ENCODE measurements at regions of chr4 and their contacts with region 1.

Region 1: GRCh38 chr4:140252742-140253555 is 99.0 kb upstream of the MAML3 start:
- DNase-seq: peak; percentile 67
- ATAC-seq: peak; percentile 83
- H3K4me3 Mint-ChIP-seq: peak overlapping the region; percentile 72
- H3K27ac Mint-ChIP-seq: no peak overlapping the region
- H3K4me1 Mint-ChIP-seq: peaks cover 8% of the 10 kb centered on the region
- H3K27me3 Mint-ChIP-seq: peaks cover 25% of the 10 kb centered on the region
- CTCF ChIP-seq: peak; percentile 82

Region 2: GRCh38 chr4:139603576-139604387 is 649.2 kb before region 1 on chr4:
- CTCF ChIA-PET with region 1: interaction called, 24 read pairs
- POLR2A ChIA-PET with region 1: no interaction called
- intact Hi-C with region 1: loop called (anchors 1 kb)
- DNase-seq: no peak
- ATAC-seq: peak; percentile 45
- H3K4me3 Mint-ChIP-seq: no peak overlapping the region
- H3K27ac Mint-ChIP-seq: no peak overlapping the region
- H3K4me1 Mint-ChIP-seq: peaks cover 9% of the 10 kb centered on the region
- H3K27me3 Mint-ChIP-seq: peaks cover 5% of the 10 kb centered on the region
- CTCF ChIP-seq: no peak

Region 3: DNA sequence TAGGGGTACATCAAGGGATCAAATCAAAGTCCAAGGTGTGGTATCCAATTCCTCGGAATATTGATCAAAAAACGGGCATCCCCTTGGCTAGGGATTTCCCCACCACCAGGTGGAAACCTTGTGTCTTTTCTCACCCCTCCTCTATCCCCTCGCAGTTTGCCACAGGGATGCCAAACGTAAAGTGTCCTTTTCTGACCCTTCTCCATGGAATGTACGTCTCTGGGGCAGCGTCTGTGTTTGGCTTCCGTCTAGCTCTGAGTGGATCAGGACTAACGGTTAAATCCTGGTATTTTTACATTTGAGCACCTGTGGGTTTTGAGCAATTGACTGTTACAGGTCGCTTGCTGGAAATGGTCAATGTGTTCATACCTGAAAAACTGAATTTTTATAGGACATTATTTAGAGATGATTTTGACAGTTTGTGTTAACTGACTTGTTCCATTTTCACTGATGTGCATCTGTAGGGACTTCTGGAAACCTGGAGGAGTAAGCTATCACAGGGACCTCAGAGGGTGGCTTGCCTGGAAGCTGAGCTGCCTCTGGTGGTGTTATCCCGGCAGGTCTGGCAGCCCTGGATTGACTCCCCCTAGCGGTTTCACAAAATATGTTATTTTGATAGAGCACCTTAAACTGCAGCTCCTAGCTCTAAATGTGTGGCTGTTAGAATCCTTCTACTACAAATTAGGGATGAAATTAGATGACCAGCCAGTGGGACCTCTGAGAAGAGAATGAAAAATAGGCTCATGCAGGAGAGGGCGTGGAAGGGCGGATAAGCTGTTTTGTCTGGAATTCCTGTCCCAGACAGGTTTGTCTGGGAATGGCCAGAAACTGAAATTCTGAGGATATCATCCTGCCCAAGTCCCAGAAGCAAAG is 596.1 kb before region 1 on chr4:
- CTCF ChIA-PET with region 1: interaction called, 18 read pairs
- POLR2A ChIA-PET with region 1: no interaction called
- intact Hi-C with region 1: loop called (anchors 1 kb)
- DNase-seq: no peak
- ATAC-seq: peak; percentile 79
- H3K4me3 Mint-ChIP-seq: no peak overlapping the region
- H3K27ac Mint-ChIP-seq: no peak overlapping the region
- H3K4me1 Mint-ChIP-seq: peaks cover 5% of the 10 kb centered on the region
- H3K27me3 Mint-ChIP-seq: peaks cover 17% of the 10 kb centered on the region
- CTCF ChIP-seq: peak; percentile 70

Region 4: DNA sequence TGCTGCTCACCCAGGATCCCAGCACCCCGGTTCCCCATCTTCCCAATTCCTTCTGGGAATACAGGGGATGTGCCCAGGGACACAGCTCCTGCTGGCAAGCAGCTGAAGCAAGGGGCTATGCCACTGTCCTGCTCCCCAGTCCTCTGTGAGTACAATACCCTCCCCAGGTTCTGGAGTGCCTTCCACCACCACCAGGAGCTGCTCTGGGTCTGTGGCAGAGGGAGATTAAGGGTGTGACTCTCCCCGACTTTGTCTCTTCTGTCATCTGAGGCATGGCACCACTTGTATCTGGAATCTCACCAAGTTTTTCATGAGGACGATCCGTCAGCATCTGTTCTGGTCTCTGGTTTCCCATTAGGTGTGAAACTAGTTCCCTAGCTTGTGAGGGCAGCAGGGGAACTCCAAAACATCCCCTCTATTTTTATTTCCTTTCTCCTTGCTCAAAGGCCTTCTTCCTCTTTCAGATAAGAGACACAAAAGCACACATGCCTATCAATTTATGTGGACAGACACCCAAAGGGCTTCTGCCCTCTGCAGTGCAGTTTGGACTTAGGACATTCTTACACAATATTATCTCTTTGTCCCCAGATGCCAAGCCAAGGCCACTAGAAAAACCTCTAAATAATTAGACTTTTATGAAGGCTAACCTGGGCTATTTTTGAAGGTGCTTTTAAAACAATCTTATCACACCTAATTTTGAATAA is 560.5 kb before region 1 on chr4:
- CTCF ChIA-PET with region 1: no interaction called
- POLR2A ChIA-PET with region 1: no interaction called
- intact Hi-C with region 1: loop called (anchors 1 kb)
- DNase-seq: no peak
- ATAC-seq: no peak
- H3K4me3 Mint-ChIP-seq: no peak overlapping the region
- H3K27ac Mint-ChIP-seq: no peak overlapping the region
- H3K4me1 Mint-ChIP-seq: peaks cover 4% of the 10 kb centered on the region
- H3K27me3 Mint-ChIP-seq: no peaks in the 10 kb centered on the region
- CTCF ChIP-seq: no peak

Region 5: GRCh38 chr4:139734875-139735380 is 518.0 kb before region 1 on chr4:
- CTCF ChIA-PET with region 1: interaction called, 42 read pairs
- POLR2A ChIA-PET with region 1: no interaction called
- intact Hi-C with region 1: loop called (anchors 1 kb)
- DNase-seq: peak; percentile 66
- ATAC-seq: peak; percentile 87
- H3K4me3 Mint-ChIP-seq: peak overlapping the region; percentile 76
- H3K27ac Mint-ChIP-seq: no peak overlapping the region
- H3K4me1 Mint-ChIP-seq: peaks cover 15% of the 10 kb centered on the region
- H3K27me3 Mint-ChIP-seq: peaks cover 13% of the 10 kb centered on the region
- CTCF ChIP-seq: no peak

Region 6: DNA sequence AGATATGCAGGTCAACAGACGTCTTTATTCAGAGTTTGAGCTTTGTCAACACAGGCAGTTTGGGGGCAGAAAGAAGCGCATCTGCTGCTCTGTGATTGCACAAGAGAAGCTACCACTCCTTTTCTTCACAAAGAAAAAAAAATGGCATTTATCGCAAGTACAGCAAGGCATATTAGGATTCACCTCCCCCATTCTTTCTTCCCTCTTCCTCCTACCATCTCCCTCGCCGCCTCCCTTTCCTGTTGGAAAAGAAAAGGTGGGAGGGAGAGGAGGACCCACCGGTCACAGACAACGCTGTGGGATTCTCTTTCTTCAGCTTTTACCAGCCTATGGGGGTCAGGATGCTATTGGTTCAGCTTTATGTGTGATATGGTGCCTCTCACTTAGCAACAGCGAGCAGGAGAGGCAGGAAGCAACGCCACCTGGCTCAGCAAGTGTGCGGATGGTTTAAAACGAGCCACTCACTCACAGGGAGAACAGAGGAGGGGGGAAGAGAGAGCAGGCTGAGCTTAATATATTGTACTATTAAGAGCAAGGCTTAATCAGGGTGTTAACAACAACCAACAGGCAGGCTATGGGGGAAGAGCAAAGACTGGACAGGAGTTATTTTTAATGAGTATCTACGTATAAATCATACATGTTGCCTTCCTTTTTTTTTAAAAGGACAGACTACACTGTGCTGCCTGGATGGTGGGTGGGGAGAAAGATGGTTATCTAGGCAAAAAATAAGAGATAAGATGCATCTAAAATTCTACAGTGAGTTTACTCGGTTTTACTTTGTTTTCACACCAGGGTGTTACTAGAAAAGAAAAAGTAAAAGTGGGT is 203.7 kb before region 1 on chr4:
- CTCF ChIA-PET with region 1: interaction called, 23 read pairs
- POLR2A ChIA-PET with region 1: no interaction called
- intact Hi-C with region 1: loop called (anchors 1 kb)
- DNase-seq: no peak
- ATAC-seq: peak; percentile 81
- H3K4me3 Mint-ChIP-seq: peak overlapping the region; percentile 74
- H3K27ac Mint-ChIP-seq: peak overlapping the region; percentile 33
- H3K4me1 Mint-ChIP-seq: peaks cover 33% of the 10 kb centered on the region
- H3K27me3 Mint-ChIP-seq: peaks cover 14% of the 10 kb centered on the region
- CTCF ChIP-seq: no peak

Region 7: DNA sequence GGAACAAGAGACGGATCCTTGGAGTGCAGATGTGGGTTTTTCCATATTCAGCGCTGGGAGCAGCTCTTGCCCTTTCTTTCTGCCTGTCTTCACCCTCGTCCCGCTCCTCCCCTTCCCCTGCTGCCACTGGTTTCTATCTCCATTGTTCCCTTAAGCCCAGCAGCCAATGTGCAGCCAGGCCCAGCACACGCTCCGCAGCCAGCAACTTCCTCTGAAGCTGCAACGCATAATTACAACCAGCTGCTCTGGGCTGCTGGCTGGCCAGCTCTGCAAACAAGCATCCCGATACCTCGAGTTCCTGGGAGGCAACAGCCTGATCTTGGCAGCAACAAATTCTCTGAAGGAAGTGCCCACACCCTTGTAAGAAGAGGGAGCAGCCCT is 15.4 kb before region 1 on chr4:
- CTCF ChIA-PET with region 1: interaction called, 20 read pairs
- POLR2A ChIA-PET with region 1: interaction called, 11 read pairs
- intact Hi-C with region 1: no loop called
- DNase-seq: no peak
- ATAC-seq: no peak
- H3K4me3 Mint-ChIP-seq: no peak overlapping the region
- H3K27ac Mint-ChIP-seq: no peak overlapping the region
- H3K4me1 Mint-ChIP-seq: peaks cover 62% of the 10 kb centered on the region
- H3K27me3 Mint-ChIP-seq: peaks cover 20% of the 10 kb centered on the region
- CTCF ChIP-seq: no peak

Region 8: GRCh38 chr4:140736673-140737343 is 483.9 kb after region 1 on chr4:
- CTCF ChIA-PET with region 1: no interaction called
- POLR2A ChIA-PET with region 1: no interaction called
- intact Hi-C with region 1: no loop called
- DNase-seq: no peak
- ATAC-seq: peak; percentile 28
- H3K4me3 Mint-ChIP-seq: no peak overlapping the region
- H3K27ac Mint-ChIP-seq: peak overlapping the region; percentile 27
- H3K4me1 Mint-ChIP-seq: peaks cover 85% of the 10 kb centered on the region
- H3K27me3 Mint-ChIP-seq: no peaks in the 10 kb centered on the region
- CTCF ChIP-seq: no peak

Measured in activated B cell treated with CpG ODN at 0.5 μM for 24 hours (primary cell).